A549 (cell line): ENCODE measurements at regions of chr5 and their contacts with region 1.

Region 1: DNA sequence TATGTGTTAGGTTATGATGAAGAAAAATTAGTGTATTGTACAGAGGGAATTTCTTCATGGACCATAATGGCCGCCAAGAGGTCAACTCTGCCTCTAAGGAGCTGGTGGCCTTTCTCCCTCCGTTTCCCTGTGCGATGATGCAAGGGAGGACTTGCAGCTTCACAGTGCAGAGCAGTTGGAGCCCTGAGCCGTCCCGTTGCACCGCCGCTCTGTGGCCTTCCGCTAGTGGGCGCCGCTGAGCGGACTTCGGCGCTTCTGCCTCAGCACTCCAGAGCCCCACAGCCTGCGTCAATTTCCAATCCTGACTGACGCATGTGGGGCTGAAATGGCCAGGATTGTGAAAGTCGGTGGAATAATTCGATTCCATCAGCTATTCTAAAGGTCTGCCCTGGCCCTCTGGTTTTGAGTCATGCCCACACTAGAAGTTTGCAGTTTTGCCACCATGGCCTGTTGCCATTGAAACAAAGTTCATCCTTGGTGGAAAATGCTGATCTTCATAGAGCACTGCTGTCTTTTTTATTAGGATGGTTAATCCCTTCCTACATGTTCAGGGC is 22.7 kb upstream of the LECT2 start:
- DNase-seq: peak; percentile 62 to 95
- ATAC-seq: peak; percentile 97 to 99
- H3K4me3 ChIP-seq: no peak overlapping the region
- H3K27ac ChIP-seq: peak overlapping the region; percentile 85 to 86
- H3K4me1 ChIP-seq: peaks cover 64% of the 10 kb centered on the region
- CTCF ChIP-seq: peak; percentile 82
- EP300 ChIP-seq: peak; percentile 86 to 93; a peak in 4 of 5 replicates
- POLR2A ChIP-seq: no peak
- RAD21 ChIP-seq: peak; percentile 88 to 90

Region 2: GRCh38 chr5:135964670-135965320 is 12.7 kb before region 1 on chr5:
- CTCF ChIA-PET with region 1: interaction called, 19 read pairs
- POLR2A ChIA-PET with region 1: no interaction called
- DNase-seq: no peak
- ATAC-seq: no peak
- H3K4me3 ChIP-seq: no peak overlapping the region
- H3K27ac ChIP-seq: peak overlapping the region in 1 of 2 experiments; percentile 48; a peak in 2 of 6 replicates
- H3K4me1 ChIP-seq: peaks cover 6% of the 10 kb centered on the region; the same call in 1 of the 3 replicates
- CTCF ChIP-seq: no peak
- EP300 ChIP-seq: no peak
- POLR2A ChIP-seq: no peak
- RAD21 ChIP-seq: no peak

Region 3: GRCh38 chr5:136006761-136007251 is 29.4 kb after region 1 on chr5:
- CTCF ChIA-PET with region 1: interaction called, 22 read pairs
- POLR2A ChIA-PET with region 1: interaction called, 5 read pairs
- DNase-seq: peak; percentile 81 to 93
- ATAC-seq: peak; percentile 86 to 92
- H3K4me3 ChIP-seq: no peak overlapping the region; the same call in 2 of the 3 replicates
- H3K27ac ChIP-seq: peak overlapping the region; percentile 92 to 96
- H3K4me1 ChIP-seq: peaks cover 60% of the 10 kb centered on the region
- CTCF ChIP-seq: no peak
- EP300 ChIP-seq: peak; percentile 72 to 86; a peak in 2 of 5 replicates
- POLR2A ChIP-seq: no peak
- RAD21 ChIP-seq: peak in 1 of 2 experiments; percentile 43; a peak in 3 of 5 replicates

Region 4: DNA sequence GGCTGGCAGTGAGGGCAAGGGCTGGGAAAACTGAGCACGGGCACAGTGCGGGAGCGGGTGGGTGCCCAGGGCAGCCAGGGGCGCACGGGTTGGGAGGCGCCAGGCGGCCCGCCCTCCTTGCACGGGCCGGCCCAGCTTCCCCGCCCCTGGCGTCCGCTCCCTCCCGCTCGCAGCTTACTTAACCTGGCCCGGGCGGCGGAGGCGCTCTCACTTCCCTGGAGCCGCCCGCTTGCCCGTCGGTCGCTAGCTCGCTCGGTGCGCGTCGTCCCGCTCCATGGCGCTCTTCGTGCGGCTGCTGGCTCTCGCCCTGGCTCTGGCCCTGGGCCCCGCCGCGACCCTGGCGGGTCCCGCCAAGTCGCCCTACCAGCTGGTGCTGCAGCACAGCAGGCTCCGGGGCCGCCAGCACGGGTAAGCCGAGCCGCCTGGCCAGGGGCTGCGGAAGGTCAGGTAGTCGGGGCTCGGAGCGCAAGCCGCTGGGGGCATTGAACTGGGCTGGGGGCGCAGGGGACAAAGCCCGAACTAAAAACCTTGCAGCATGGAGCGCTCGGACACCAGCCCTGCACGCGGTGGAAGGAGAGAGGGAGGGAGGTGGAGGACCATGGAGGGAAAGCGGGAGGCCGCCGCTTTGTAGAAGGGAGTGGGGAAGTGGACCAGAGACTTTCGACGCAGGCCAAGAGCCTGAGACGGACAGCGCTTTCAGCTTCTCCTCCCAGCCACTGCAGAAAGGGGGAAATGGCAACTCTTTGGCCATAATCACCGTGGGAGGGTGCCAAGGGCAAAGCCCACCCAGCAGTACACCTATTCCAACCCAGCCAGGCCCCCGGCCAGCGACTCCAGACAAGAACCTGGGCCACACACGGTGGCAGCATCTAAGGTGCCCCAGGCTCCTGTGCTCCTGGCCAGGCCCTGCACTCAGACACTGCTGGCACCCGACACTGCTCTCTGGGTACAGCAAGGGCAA is 51.6 kb after region 1 on chr5 and contains the start of gene TGFBI:
- CTCF ChIA-PET with region 1: interaction called, 32 read pairs
- POLR2A ChIA-PET with region 1: interaction called, 14 read pairs
- DNase-seq: peak; percentile 78 to 83
- ATAC-seq: peak; percentile 89 to 94
- H3K4me3 ChIP-seq: peak within 1 kb of the TSS; percentile 97
- H3K27ac ChIP-seq: peak within 1 kb of the TSS; percentile 99 to 100
- H3K4me1 ChIP-seq: peaks cover 52% of the 10 kb centered on the region
- CTCF ChIP-seq: no peak; the same call in 2 of the 3 replicates
- EP300 ChIP-seq: no peak
- POLR2A ChIP-seq: peak; percentile 98
- RAD21 ChIP-seq: peak in 1 of 2 experiments; percentile 51; a peak in 3 of 5 replicates
- polyA plus RNA-seq, gene TGFBI: 1,135 and 1,466 TPM in 2 replicates

Region 5: GRCh38 chr5:136053336-136054141 is 76.1 kb after region 1 on chr5:
- CTCF ChIA-PET with region 1: interaction called, 31 read pairs
- POLR2A ChIA-PET with region 1: interaction called, 5 read pairs
- DNase-seq: peak; percentile 94 to 95
- ATAC-seq: peak; percentile 54 to 73
- H3K4me3 ChIP-seq: 0 out of 3 replicates have a peak overlapping the region, but pooled peaks have one; percentile 17
- H3K27ac ChIP-seq: peak overlapping the region; percentile 86 to 93
- H3K4me1 ChIP-seq: peaks cover 94% of the 10 kb centered on the region
- CTCF ChIP-seq: no peak
- EP300 ChIP-seq: peak; percentile 91 to 96; a peak in 4 of 5 replicates
- POLR2A ChIP-seq: no peak
- RAD21 ChIP-seq: peak; percentile 22 to 43; a peak in 4 of 5 replicates